ENCODE measurements at regions of chr19 and their contacts with region 1.

Region 1: GRCh38 chr19:10403137-10404021 is at the start of gene CDC37:
- DNase-seq: peak; percentile 98
- H3K4me3 ChIP-seq: peak within 1 kb of the TSS; percentile 95 to 98 (median 95)
- H3K27ac ChIP-seq: peak within 1 kb of the TSS; percentile 88
- H3K4me1 ChIP-seq: peaks cover 15% of the 10 kb centered on the region
- H3K27me3 ChIP-seq: peaks cover 12 to 23% of the 10 kb centered on the region in 2 experiments
- CTCF ChIP-seq: no peak
- POLR2A ChIP-seq: peak; percentile 97
- total RNA-seq, gene CDC37: 275 and 300 TPM in 2 replicates

Region 2: GRCh38 chr19:10380313-10381102 is 22.9 kb before region 1 on chr19 and contains the start of gene TYK2:
- CTCF ChIA-PET with region 1: no interaction called
- POLR2A ChIA-PET with region 1: no interaction called
- dilution Hi-C with region 1: no loop called
- intact Hi-C with region 1: no loop called
- DNase-seq: peak; percentile 99
- H3K4me3 ChIP-seq: peak within 1 kb of the TSS; percentile 78 to 96 (median 89)
- H3K27ac ChIP-seq: peak within 1 kb of the TSS; percentile 10
- H3K4me1 ChIP-seq: peaks cover 12% of the 10 kb centered on the region
- H3K27me3 ChIP-seq: no peaks in the 10 kb centered on the region
- CTCF ChIP-seq: no peak
- POLR2A ChIP-seq: peak; percentile 90
- total RNA-seq, gene TYK2: 138 and 142 TPM in 2 replicates

Region 3: GRCh38 chr19:10416380-10417257 is 13.2 kb after region 1 on chr19:
- CTCF ChIA-PET with region 1: interaction called, 108 read pairs
- POLR2A ChIA-PET with region 1: interaction called, 3 read pairs
- dilution Hi-C with region 1: no loop called
- intact Hi-C with region 1: loop called (anchors 1 kb)
- DNase-seq: peak; percentile 73
- H3K4me3 ChIP-seq: peak overlapping the region; percentile 4 to 44 (median 25)
- H3K27ac ChIP-seq: no peak overlapping the region
- H3K4me1 ChIP-seq: peaks cover 14% of the 10 kb centered on the region
- H3K27me3 ChIP-seq: peaks cover 34 to 38% of the 10 kb centered on the region in 2 experiments
- CTCF ChIP-seq: peak; percentile 89 to 90
- POLR2A ChIP-seq: no peak

Region 4: GRCh38 chr19:10431943-10432735 is 28.8 kb after region 1 on chr19:
- CTCF ChIA-PET with region 1: interaction called, 17 read pairs
- POLR2A ChIA-PET with region 1: interaction called, 3 read pairs
- dilution Hi-C with region 1: no loop called
- intact Hi-C with region 1: loop called (anchors 5 kb)
- DNase-seq: no peak
- H3K4me3 ChIP-seq: peak overlapping the region in 2 of 3 experiments; percentile 47 to 51
- H3K27ac ChIP-seq: no peak overlapping the region
- H3K4me1 ChIP-seq: peaks cover 27% of the 10 kb centered on the region
- H3K27me3 ChIP-seq: no peaks in the 10 kb centered on the region
- CTCF ChIP-seq: no peak
- POLR2A ChIP-seq: no peak

Region 5: DNA sequence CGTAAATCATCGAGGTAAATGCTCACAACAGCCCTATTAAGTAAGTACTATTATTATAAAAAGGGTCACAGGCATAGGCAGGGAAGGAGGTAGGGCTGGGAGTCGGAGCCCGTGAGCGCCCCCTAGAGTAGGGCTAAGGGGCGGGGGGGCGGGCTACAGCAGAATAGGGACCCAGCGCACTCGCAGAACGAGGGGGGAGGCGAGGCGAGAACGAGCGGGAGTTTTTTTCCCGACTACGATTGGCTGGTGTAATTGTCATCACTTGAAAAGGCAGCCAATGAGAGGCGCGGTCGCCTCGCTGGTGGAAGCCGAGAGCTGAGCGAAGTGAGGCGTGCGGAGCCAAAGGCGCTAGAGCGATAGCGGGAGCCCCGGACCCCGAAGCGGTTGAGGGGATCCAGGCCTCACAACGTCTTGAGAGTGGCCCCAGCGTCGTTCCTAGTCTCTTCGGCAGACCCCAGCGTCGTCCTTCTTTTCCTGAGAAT is 75.6 kb after region 1 on chr19:
- CTCF ChIA-PET with region 1: interaction called, 11 read pairs
- POLR2A ChIA-PET with region 1: no interaction called
- dilution Hi-C with region 1: no loop called
- intact Hi-C with region 1: loop called (anchors 2 kb)
- DNase-seq: peak; percentile 95
- H3K4me3 ChIP-seq: peak overlapping the region in 1 of 3 experiments; percentile 11
- H3K27ac ChIP-seq: no peak overlapping the region
- H3K4me1 ChIP-seq: peaks cover 7% of the 10 kb centered on the region
- H3K27me3 ChIP-seq: no peaks in the 10 kb centered on the region
- CTCF ChIP-seq: peak in 1 of 2 donors; percentile 71
- POLR2A ChIP-seq: no peak

Region 6: DNA sequence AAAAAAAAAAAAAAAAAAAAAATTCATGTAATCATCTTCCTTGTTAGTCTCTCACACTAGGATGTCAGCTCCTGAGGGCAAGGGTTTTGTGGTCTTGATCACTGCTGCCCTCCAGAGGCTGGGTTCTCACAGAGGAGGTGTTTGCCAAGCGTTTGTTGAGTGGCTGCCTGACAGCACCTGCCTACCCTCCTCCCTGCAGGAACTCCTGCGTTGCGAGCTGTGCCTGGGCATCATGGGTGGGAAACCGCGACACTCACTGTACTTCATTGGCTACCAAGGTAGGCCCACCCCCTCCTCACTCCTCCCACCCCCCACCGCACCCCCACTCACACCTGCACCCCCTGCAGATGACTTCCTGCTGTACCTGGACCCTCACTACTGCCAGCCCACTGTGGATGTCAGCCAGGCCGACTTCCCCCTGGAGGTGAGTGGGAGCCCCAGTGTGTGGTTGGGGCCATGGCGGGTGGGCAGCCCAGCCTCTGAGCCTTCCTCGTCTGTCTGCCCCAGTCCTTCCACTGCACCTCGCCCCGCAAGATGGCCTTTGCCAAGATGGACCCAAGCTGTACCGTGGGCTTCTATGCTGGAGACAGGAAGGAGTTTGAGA is 148.4 kb after region 1 on chr19:
- CTCF ChIA-PET with region 1: no interaction called
- POLR2A ChIA-PET with region 1: no interaction called
- dilution Hi-C with region 1: no loop called
- intact Hi-C with region 1: no loop called
- DNase-seq: no peak
- H3K4me3 ChIP-seq: no peak overlapping the region
- H3K27ac ChIP-seq: no peak overlapping the region
- H3K4me1 ChIP-seq: no peaks in the 10 kb centered on the region
- H3K27me3 ChIP-seq: no peaks in the 10 kb centered on the region
- CTCF ChIP-seq: no peak
- POLR2A ChIP-seq: no peak

Measured in endothelial cell of umbilical vein (primary cell).